Gastrocnemius medialis (tissue), 4 donors: ENCODE measurements at regions of chr4 and their contacts with region 1.

Region 1: GRCh38 chr4:3346146-3346545 is 53.3 kb downstream of the RGS12 start:
- DNase-seq: peak in 1 of 2 donors; percentile 46
- ATAC-seq: peak; percentile 98 to 99
- H3K4me3 ChIP-seq: no peak overlapping the region
- H3K27ac ChIP-seq: no peak overlapping the region
- H3K4me1 ChIP-seq: peaks cover 0 to 8% of the 10 kb centered on the region in 2 donors
- H3K27me3 ChIP-seq: no peaks in the 10 kb centered on the region
- CTCF ChIP-seq: peak; percentile 84 to 94 (median 89)
- POLR2A ChIP-seq: no peak

Region 2: GRCh38 chr4:3106339-3107186 is 239.6 kb before region 1 on chr4:
- in situ Hi-C with region 1: no loop called
- intact Hi-C with region 1: loop called (anchors 10 kb)
- DNase-seq: peak; percentile 82 to 89
- ATAC-seq: peak; percentile 94 to 98
- H3K4me3 ChIP-seq: peak overlapping the region in 1 of 4 donors; percentile 10
- H3K27ac ChIP-seq: peak overlapping the region; percentile 72 to 84 (median 82)
- H3K4me1 ChIP-seq: peaks cover 27% of the 10 kb centered on the region in 2 donors
- H3K27me3 ChIP-seq: no peaks in the 10 kb centered on the region
- CTCF ChIP-seq: peak; percentile 94 to 99 (median 96)
- POLR2A ChIP-seq: no peak

Region 3: DNA sequence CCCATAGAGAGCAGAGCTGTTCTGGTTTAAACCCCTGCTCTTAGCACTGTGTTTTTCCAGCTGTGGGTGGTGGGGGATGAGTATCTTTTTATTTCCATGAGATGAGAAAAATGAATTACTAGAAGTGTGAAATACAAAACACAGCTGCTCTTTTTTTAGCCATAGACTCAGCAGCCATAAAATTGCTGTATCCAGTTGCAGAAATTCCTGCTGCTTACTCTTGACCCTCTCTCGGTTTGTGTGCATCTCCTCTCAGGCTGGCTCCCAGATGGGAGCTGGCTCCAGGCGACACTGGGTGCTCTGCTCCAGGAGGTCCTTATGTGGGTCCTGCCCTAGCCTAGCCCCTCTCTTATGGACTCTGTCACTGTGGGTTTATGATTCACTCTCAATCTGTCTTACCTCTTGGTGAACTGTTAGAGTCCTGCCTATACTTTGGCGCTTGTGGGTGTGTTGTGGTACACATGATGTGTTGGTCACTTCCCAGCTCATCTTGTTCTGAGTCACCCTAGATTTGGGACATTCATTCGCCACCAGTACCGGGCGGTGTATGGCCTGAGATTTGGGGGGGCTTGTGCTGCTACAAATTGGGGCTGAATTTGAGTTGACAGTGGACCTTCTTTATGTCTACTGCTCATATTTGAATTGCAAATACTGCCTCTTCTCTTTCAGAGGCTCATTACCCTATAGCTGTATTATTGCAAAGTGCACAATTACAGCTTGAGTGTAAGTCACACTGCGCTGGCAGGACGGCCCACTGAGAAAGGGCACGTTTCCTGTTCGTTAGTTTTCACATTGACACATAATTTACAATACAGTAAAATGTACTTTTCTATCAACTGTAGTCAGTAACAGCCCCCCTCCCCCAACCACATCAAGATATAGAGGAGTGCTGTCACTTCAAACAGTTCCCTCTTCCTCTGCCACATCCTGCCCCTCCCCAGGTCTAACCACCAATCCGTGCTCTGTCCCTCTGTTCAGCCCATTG is 144.1 kb before region 1 on chr4:
- in situ Hi-C with region 1: no loop called
- intact Hi-C with region 1: loop called (anchors 5 kb)
- DNase-seq: peak; percentile 40 to 58
- ATAC-seq: peak; percentile 61 to 67
- H3K4me3 ChIP-seq: no peak overlapping the region
- H3K27ac ChIP-seq: peak overlapping the region; percentile 77 to 85 (median 82)
- H3K4me1 ChIP-seq: peaks cover 48 to 56% of the 10 kb centered on the region in 2 donors
- H3K27me3 ChIP-seq: no peaks in the 10 kb centered on the region
- CTCF ChIP-seq: no peak
- POLR2A ChIP-seq: peak in 1 of 2 donors; percentile 70

Region 4: DNA sequence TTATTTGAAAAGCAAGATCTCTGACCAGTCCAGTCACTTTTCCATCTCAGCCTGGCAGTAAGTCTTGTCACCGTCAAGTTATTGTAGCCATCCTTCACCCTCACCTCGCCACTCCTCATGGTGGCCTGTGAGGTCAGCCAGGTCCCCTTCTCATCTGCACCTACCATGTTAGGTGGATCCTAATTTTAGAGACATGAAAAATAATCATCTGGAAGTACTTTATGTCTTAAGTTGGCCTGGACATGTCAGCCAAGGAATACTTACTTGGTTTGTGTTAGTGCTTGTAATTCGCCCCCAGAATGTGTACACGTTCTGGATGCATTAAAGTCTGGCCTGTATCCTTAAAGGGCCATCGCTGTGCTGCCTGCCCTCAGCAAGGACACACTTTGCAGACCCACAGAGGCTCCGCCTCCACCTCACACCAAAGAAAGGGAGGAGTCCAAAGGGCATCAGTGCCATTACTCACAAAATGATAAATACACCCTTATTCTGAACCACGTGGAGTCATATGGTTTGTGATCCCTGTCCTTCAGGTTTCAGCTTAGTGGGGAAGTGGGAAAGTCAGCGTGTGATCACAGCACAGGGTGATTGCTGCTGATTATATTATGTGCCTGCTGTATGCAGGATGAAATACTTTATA is 133.2 kb before region 1 on chr4:
- in situ Hi-C with region 1: no loop called
- intact Hi-C with region 1: no loop called
- DNase-seq: peak in 1 of 2 donors; percentile 13
- ATAC-seq: peak; percentile 54 to 60
- H3K4me3 ChIP-seq: no peak overlapping the region
- H3K27ac ChIP-seq: peak overlapping the region in 1 of 4 donors; percentile 26
- H3K4me1 ChIP-seq: no peaks in the 10 kb centered on the region
- H3K27me3 ChIP-seq: no peaks in the 10 kb centered on the region
- CTCF ChIP-seq: no peak
- POLR2A ChIP-seq: no peak

Region 5: GRCh38 chr4:3436798-3437581 is 90.8 kb after region 1 on chr4:
- in situ Hi-C with region 1: loop called in 1 of 4 experiments (anchors 10 kb)
- intact Hi-C with region 1: no loop called
- DNase-seq: peak; percentile 35 to 77
- ATAC-seq: peak; percentile 34 to 64
- H3K4me3 ChIP-seq: no peak overlapping the region
- H3K27ac ChIP-seq: peak overlapping the region in 3 of 4 donors; percentile 2 to 27 (median 20)
- H3K4me1 ChIP-seq: peaks cover 0 to 4% of the 10 kb centered on the region in 2 donors
- H3K27me3 ChIP-seq: no peaks in the 10 kb centered on the region
- CTCF ChIP-seq: no peak
- POLR2A ChIP-seq: no peak

Region 6: GRCh38 chr4:3442959-3443749 is 97.0 kb after region 1 on chr4:
- in situ Hi-C with region 1: loop called in 1 of 4 experiments (anchors 10 kb)
- intact Hi-C with region 1: loop called (anchors 1 kb)
- DNase-seq: peak in 1 of 2 donors; percentile 41
- ATAC-seq: peak; percentile 57 to 86
- H3K4me3 ChIP-seq: no peak overlapping the region
- H3K27ac ChIP-seq: no peak overlapping the region
- H3K4me1 ChIP-seq: no peaks in the 10 kb centered on the region
- H3K27me3 ChIP-seq: no peaks in the 10 kb centered on the region
- CTCF ChIP-seq: peak; percentile 97 to 99 (median 98)
- POLR2A ChIP-seq: no peak

Region 7: GRCh38 chr4:3452376-3452775 is 106.2 kb after region 1 on chr4:
- in situ Hi-C with region 1: loop called in 2 of 4 experiments (anchors 10 kb)
- intact Hi-C with region 1: no loop called
- DNase-seq: no peak
- ATAC-seq: peak in 1 of 2 donors; percentile 83
- H3K4me3 ChIP-seq: no peak overlapping the region
- H3K27ac ChIP-seq: peak overlapping the region in 1 of 4 donors; percentile 69
- H3K4me1 ChIP-seq: peaks cover 0 to 4% of the 10 kb centered on the region in 2 donors
- H3K27me3 ChIP-seq: no peaks in the 10 kb centered on the region
- CTCF ChIP-seq: peak in 2 of 5 experiments; percentile 6 to 30
- POLR2A ChIP-seq: no peak

Region 8: DNA sequence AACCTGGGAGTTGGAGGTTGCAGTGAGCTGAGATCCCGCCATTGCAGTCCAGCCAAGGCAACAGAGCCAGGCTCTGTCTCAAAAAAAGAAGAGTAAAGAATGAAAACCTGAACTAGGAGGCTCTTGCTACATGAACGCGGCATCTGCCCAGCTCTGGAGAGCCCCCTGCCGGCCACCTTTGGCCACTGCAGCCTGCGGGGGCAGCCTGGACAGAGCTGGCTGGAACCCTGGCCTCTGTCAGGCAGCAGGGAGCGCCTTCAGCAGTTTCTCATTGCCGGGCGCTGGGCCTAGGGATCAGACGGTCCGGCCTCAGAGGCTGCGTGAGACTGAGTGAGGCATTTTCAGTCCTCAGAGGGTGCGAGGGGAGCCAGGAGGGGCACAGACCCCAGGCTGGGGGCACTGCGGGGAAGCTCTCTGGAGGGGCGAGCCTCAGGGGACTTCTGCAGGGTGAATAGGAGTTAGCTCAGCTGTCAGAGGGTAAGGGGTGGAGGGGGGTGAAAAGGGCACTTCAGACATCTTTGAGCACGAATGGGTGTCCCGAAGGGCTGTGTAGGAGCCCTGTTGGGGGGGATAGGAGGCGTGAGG is 134.5 kb after region 1 on chr4:
- in situ Hi-C with region 1: no loop called
- intact Hi-C with region 1: loop called (anchors 1 kb)
- DNase-seq: peak; percentile 47 to 82
- ATAC-seq: peak in 1 of 2 donors; percentile 22
- H3K4me3 ChIP-seq: no peak overlapping the region
- H3K27ac ChIP-seq: peak overlapping the region; percentile 99 to 100 (median 99)
- H3K4me1 ChIP-seq: peaks cover 49 to 57% of the 10 kb centered on the region in 2 donors
- H3K27me3 ChIP-seq: no peaks in the 10 kb centered on the region
- CTCF ChIP-seq: peak; percentile 98 to 100 (median 99)
- POLR2A ChIP-seq: peak in 1 of 2 donors; percentile 14

Region 9: GRCh38 chr4:3598695-3599227 is 252.6 kb after region 1 on chr4:
- in situ Hi-C with region 1: no loop called
- intact Hi-C with region 1: no loop called
- DNase-seq: no peak
- ATAC-seq: no peak
- H3K4me3 ChIP-seq: no peak overlapping the region
- H3K27ac ChIP-seq: no peak overlapping the region
- H3K4me1 ChIP-seq: no peaks in the 10 kb centered on the region
- H3K27me3 ChIP-seq: no peaks in the 10 kb centered on the region
- CTCF ChIP-seq: no peak
- POLR2A ChIP-seq: no peak